Ascending aorta (tissue), 2 donors: ENCODE measurements at regions of chr12 and their contacts with region 1.

Region 1: GRCh38 chr12:106022568-106023012 is 116.2 kb downstream of the NUAK1 start:
- DNase-seq: no peak
- H3K4me3 ChIP-seq: no peak overlapping the region
- H3K27ac ChIP-seq: no peak overlapping the region
- H3K4me1 ChIP-seq: peaks cover 0 to 12% of the 10 kb centered on the region in 2 donors
- H3K27me3 ChIP-seq: no peaks in the 10 kb centered on the region
- CTCF ChIP-seq: no peak

Region 2: DNA sequence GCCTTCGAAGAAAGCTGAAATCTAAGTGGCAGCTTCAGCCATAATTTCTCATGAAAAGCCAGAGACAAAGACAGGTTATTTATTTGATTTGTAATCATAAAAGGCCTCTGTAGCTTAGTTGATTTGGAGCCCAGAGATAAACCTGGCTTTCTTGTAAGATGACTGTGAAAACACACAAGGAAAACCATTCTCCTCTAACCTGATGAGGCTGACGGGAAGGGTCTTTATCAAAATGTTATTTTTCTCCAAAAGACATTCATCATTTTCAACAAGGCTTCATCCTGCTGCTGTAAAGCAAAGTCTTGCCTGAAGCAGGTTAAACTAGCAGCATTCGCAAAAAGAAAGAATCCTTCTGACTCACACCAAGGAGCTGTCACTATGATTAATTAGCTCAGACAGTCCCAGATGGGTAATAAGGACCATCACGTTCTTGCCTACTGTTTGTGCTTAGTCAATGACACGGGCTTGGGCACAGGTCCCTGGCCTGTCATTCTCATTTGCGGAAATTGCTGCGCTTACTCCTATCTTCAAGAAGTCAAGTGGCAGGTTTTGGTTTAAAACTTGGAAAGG is 405.5 kb before region 1 on chr12:
- intact Hi-C with region 1: no loop called
- DNase-seq: no peak
- H3K4me3 ChIP-seq: no peak overlapping the region
- H3K27ac ChIP-seq: no peak overlapping the region
- H3K4me1 ChIP-seq: no peaks in the 10 kb centered on the region
- H3K27me3 ChIP-seq: no peaks in the 10 kb centered on the region
- CTCF ChIP-seq: no peak

Region 3: DNA sequence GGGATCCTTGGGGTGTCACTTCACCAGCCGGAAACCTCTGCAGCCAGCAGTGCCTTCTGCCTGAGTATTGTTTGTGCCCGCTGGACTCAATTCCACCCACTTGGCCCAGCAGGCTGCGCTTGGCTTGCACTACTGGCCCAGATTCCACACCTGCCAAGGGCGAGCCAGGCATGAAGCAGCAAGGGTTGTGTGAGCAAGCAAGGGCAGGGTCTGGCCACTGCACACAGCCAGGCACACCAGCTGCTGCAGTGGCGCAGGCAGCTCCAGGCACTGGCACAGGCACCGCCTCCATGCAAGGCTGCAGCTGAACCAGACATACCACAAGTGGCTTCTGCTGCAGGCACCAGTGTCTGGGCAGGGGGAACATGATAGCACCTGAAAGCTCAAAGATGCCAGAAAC is 16.7 kb after region 1 on chr12:
- intact Hi-C with region 1: no loop called
- DNase-seq: no peak
- H3K4me3 ChIP-seq: no peak overlapping the region
- H3K27ac ChIP-seq: no peak overlapping the region
- H3K4me1 ChIP-seq: no peaks in the 10 kb centered on the region
- H3K27me3 ChIP-seq: no peaks in the 10 kb centered on the region
- CTCF ChIP-seq: no peak

Region 4: DNA sequence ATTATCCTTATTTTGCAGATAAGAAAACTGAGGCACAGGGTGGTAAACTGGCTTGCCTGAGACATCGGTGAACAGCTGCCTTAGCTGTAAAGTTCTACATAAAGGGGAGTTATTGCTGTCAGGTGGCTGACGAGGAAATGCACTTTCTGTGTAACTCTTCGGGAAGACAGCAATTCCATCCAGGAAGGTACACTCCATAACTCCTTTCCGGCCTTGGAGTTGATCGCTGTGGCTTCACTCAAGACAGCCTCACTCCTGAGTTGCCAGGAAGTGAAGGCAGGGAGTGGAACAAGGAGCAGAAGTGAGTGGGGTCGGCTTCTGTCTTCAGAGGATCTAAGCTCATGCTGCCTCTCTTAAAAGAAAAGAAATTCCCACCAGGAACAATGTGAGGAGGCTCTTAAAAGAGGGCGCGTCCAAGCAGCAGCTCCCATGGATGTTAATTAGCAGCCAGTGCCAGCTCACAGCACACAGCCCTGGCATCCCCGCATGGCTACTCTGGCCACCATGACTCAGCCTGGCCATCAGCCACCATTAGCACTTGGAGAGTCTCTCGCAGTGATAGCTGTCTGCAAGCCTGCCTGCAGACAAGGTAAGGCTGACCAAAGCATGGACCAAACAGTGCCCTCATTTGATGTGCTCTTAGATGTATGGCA is 55.9 kb after region 1 on chr12:
- intact Hi-C with region 1: loop called (anchors 5 kb)
- DNase-seq: peak in 1 of 2 donors; percentile 92
- H3K4me3 ChIP-seq: no peak overlapping the region
- H3K27ac ChIP-seq: peak overlapping the region; percentile 88 to 92
- H3K4me1 ChIP-seq: peaks cover 8 to 69% of the 10 kb centered on the region in 2 donors
- H3K27me3 ChIP-seq: no peaks in the 10 kb centered on the region
- CTCF ChIP-seq: no peak

Region 5: GRCh38 chr12:106123551-106124081 is 101.0 kb after region 1 on chr12:
- intact Hi-C with region 1: no loop called
- DNase-seq: peak in 1 of 2 donors; percentile 89
- H3K4me3 ChIP-seq: peak overlapping the region; percentile 8 to 49
- H3K27ac ChIP-seq: peak overlapping the region; percentile 75 to 93
- H3K4me1 ChIP-seq: peaks cover 10 to 88% of the 10 kb centered on the region in 2 donors
- H3K27me3 ChIP-seq: no peaks in the 10 kb centered on the region
- CTCF ChIP-seq: no peak